ENCODE measurements at regions of chr22 and their contacts with region 1.

Region 1: GRCh38 chr22:31272522-31273446 is 19.5 kb downstream of the PIK3IP1 start:
- DNase-seq: peak; percentile 67
- H3K4me3 Mint-ChIP-seq: no peak overlapping the region
- H3K27ac Mint-ChIP-seq: peak overlapping the region; percentile 40
- H3K4me1 Mint-ChIP-seq: peaks cover 24% of the 10 kb centered on the region
- H3K27me3 Mint-ChIP-seq: no peaks in the 10 kb centered on the region

Region 2: GRCh38 chr22:30947816-30948454 is 324.8 kb before region 1 on chr22:
- CTCF ChIA-PET with region 1: interaction called, 4 read pairs
- POLR2A ChIA-PET with region 1: no interaction called
- intact Hi-C with region 1: loop called (anchors 10 kb)
- DNase-seq: no peak
- H3K4me3 Mint-ChIP-seq: no peak overlapping the region
- H3K27ac Mint-ChIP-seq: no peak overlapping the region
- H3K4me1 Mint-ChIP-seq: peaks cover 33% of the 10 kb centered on the region
- H3K27me3 Mint-ChIP-seq: no peaks in the 10 kb centered on the region

Region 3: GRCh38 chr22:31055635-31056159 is 217.1 kb before region 1 on chr22:
- CTCF ChIA-PET with region 1: no interaction called
- POLR2A ChIA-PET with region 1: no interaction called
- intact Hi-C with region 1: no loop called
- DNase-seq: no peak
- H3K4me3 Mint-ChIP-seq: no peak overlapping the region
- H3K27ac Mint-ChIP-seq: no peak overlapping the region
- H3K4me1 Mint-ChIP-seq: no peaks in the 10 kb centered on the region
- H3K27me3 Mint-ChIP-seq: no peaks in the 10 kb centered on the region

Region 4: DNA sequence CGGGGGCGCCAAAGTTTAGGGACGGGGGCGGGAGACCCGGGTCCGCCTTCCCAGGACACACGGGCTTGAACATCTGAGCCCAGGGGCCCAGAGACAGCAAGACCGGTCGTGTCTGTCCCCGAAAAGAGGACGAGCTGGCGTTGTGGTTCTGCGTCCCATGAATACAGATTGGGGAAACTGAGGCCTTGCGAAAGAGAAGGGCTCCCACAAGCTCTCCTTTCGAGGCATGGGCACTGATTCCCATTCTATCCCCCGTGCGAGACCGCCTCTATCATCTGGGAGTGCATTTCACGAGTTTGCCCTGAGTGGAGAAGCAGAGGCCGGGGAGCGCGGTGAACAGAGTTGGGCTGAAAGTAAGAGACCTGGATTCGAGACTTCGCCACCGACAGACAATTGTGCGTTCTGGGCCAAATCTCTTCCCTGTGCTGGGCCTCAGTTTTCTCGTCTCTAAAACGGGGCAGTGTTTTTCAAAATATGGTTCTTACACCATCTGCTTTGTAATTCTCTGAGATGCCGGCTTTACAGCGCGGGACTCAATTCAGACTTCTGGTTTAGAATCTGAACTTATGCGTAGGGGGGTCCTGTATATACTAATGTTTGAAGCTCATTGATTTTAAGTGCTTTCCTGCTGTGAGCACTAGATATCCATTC is 112.3 kb before region 1 on chr22:
- CTCF ChIA-PET with region 1: interaction called, 10 read pairs
- POLR2A ChIA-PET with region 1: interaction called, 3 read pairs
- intact Hi-C with region 1: no loop called
- DNase-seq: peak; percentile 29
- H3K4me3 Mint-ChIP-seq: peak overlapping the region; percentile 99
- H3K27ac Mint-ChIP-seq: peak overlapping the region; percentile 97
- H3K4me1 Mint-ChIP-seq: peaks cover 34% of the 10 kb centered on the region
- H3K27me3 Mint-ChIP-seq: no peaks in the 10 kb centered on the region

Region 5: DNA sequence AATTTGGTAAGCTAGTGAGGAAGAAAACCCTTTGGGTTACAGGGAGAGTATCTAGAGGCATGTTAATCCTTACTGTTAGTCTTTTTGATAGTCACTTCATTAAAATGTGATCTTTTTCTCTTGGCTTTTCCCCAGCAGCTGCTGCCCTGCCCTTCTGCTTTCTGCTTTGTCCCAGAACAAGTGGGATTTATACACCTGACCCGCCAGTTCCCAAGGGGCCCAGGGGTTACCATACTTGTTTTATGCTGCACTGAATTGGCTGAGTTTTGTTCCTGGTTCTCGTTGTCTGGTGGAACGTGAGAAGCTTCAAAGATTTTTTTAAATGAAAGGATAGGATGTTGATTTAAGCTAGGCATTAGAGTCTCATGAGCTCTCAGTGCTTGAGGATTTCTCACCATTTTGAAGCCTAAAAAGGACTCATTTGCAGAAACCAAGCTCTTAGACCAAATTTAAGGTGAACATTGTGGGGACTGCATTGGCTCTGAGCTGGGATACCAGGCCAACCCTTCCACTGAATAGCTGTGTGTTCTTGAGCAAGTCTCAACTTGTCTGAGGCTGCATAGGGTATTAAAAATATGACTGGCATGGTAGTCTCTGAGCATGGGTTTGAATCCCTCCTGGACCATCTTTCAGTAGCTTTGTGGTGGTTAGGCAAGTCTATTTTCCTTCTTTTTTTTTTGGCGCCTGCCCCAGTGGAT is 54.1 kb before region 1 on chr22:
- CTCF ChIA-PET with region 1: interaction called, 79 read pairs
- POLR2A ChIA-PET with region 1: no interaction called
- intact Hi-C with region 1: loop called (anchors 2 kb)
- DNase-seq: no peak
- H3K4me3 Mint-ChIP-seq: no peak overlapping the region
- H3K27ac Mint-ChIP-seq: peak overlapping the region; percentile 21
- H3K4me1 Mint-ChIP-seq: peaks cover 58% of the 10 kb centered on the region
- H3K27me3 Mint-ChIP-seq: no peaks in the 10 kb centered on the region

Region 6: DNA sequence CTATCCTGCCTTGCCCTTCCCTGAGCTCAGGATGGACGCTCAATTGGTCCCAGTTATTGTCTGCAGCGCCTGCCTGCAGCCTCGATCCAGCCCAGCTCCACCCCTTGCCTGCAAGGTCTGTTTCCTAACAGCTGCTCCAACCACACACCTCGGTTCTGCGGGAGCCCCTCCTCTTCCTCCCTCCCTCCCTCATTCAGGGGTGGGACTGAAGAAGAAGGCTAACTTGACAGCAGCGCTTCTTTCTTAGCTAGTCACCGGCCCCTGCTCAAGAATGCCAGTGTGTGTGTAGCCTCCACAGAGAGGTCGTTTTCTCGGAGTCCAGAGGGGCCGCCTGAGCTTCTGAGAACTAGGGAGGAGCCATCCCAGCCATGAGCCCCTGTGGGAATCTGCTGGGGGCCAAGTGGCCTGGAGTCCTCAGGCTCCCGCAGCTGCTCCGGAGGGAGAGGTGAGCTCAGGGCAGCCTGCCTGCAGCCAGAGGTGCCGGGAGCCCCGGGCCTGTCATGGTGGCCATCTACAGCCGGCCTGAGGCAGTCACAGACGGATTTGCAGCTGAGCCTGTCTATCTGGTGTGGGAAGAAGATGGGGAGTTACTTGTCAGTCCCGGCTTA is 24.5 kb before region 1 on chr22:
- CTCF ChIA-PET with region 1: interaction called, 43 read pairs
- POLR2A ChIA-PET with region 1: no interaction called
- intact Hi-C with region 1: no loop called
- DNase-seq: peak; percentile 71
- H3K4me3 Mint-ChIP-seq: no peak overlapping the region
- H3K27ac Mint-ChIP-seq: no peak overlapping the region
- H3K4me1 Mint-ChIP-seq: peaks cover 17% of the 10 kb centered on the region
- H3K27me3 Mint-ChIP-seq: no peaks in the 10 kb centered on the region

Region 7: GRCh38 chr22:31313366-31314147 is 40.8 kb after region 1 on chr22:
- CTCF ChIA-PET with region 1: interaction called, 19 read pairs
- POLR2A ChIA-PET with region 1: interaction called, 3 read pairs
- intact Hi-C with region 1: loop called (anchors 5 kb)
- DNase-seq: peak; percentile 79
- H3K4me3 Mint-ChIP-seq: no peak overlapping the region
- H3K27ac Mint-ChIP-seq: no peak overlapping the region
- H3K4me1 Mint-ChIP-seq: peaks cover 23% of the 10 kb centered on the region
- H3K27me3 Mint-ChIP-seq: no peaks in the 10 kb centered on the region